Ascending aorta (tissue), 2 donors: ENCODE measurements at regions of chr1 and their contacts with region 1.

Region 1: GRCh38 chr1:39973503-39974135 is 18.7 kb downstream of the MFSD2A start:
- DNase-seq: peak in 1 of 2 donors; percentile 83
- H3K4me3 ChIP-seq: no peak overlapping the region
- H3K27ac ChIP-seq: no peak overlapping the region
- H3K4me1 ChIP-seq: no peaks in the 10 kb centered on the region
- H3K27me3 ChIP-seq: no peaks in the 10 kb centered on the region
- CTCF ChIP-seq: peak; percentile 89 to 95 (median 90)

Region 2: GRCh38 chr1:39926343-39926793 is 47.3 kb before region 1 on chr1:
- intact Hi-C with region 1: loop called (anchors 5 kb)
- DNase-seq: no peak
- H3K4me3 ChIP-seq: no peak overlapping the region
- H3K27ac ChIP-seq: no peak overlapping the region
- H3K4me1 ChIP-seq: no peaks in the 10 kb centered on the region
- H3K27me3 ChIP-seq: no peaks in the 10 kb centered on the region
- CTCF ChIP-seq: no peak

Region 3: DNA sequence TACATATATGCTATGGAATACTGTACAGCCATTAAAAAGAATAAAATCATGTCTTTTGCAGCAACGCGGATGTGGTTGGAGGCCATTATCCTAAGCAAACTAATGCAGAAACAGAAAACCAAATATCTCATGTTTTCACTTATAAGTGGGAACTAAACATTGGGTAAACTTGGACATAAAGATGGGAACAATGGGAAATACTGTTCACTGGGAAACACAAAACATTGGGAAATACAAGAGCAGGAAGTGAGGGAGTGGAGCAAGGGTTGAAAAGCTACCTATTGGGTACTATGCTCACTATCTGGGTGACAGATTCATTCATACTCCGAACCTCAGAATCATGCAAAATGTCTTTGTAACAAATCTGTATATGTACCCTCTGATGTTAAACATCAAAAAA is 140.8 kb after region 1 on chr1:
- intact Hi-C with region 1: no loop called
- DNase-seq: no peak
- H3K4me3 ChIP-seq: no peak overlapping the region
- H3K27ac ChIP-seq: no peak overlapping the region
- H3K4me1 ChIP-seq: no peaks in the 10 kb centered on the region
- H3K27me3 ChIP-seq: no peaks in the 10 kb centered on the region
- CTCF ChIP-seq: no peak